GM12878 (cell line): ENCODE measurements at regions of chr2 and their contacts with region 1.

Region 1: GRCh38 chr2:69298261-69298660 is 88.8 kb downstream of the GFPT1 start:
- DNase-seq: no peak
- ATAC-seq: no peak
- H3K4me3 ChIP-seq: no peak overlapping the region
- H3K27ac ChIP-seq: no peak overlapping the region
- H3K4me1 ChIP-seq: no peaks in the 10 kb centered on the region
- H3K27me3 ChIP-seq: no peaks in the 10 kb centered on the region; a peak in 1 of 4 replicates
- CTCF ChIP-seq: no peak
- EP300 ChIP-seq: no peak
- POLR2A ChIP-seq: no peak
- RAD21 ChIP-seq: no peak

Region 2: GRCh38 chr2:69036926-69037325 is 261.3 kb before region 1 on chr2:
- CTCF ChIA-PET with region 1: no interaction called
- POLR2A ChIA-PET with region 1: no interaction called
- RAD21 ChIA-PET with region 1: no interaction called
- SMC1A ChIA-PET with region 1: no interaction called
- in situ Hi-C with region 1: loop called (anchors 5 kb)
- intact Hi-C with region 1: no loop called
- DNase-seq: no peak
- ATAC-seq: no peak
- H3K4me3 ChIP-seq: no peak overlapping the region
- H3K27ac ChIP-seq: no peak overlapping the region
- H3K4me1 ChIP-seq: no peaks in the 10 kb centered on the region
- H3K27me3 ChIP-seq: peaks cover 0 to 3% of the 10 kb centered on the region in 2 experiments; a peak in 2 of 4 replicates
- CTCF ChIP-seq: no peak
- EP300 ChIP-seq: no peak
- POLR2A ChIP-seq: no peak
- RAD21 ChIP-seq: no peak

Region 3: GRCh38 chr2:69073928-69074570 is 224.2 kb before region 1 on chr2:
- CTCF ChIA-PET with region 1: no interaction called
- POLR2A ChIA-PET with region 1: no interaction called
- RAD21 ChIA-PET with region 1: no interaction called
- SMC1A ChIA-PET with region 1: no interaction called
- in situ Hi-C with region 1: no loop called
- intact Hi-C with region 1: no loop called
- DNase-seq: no peak
- ATAC-seq: no peak
- H3K4me3 ChIP-seq: no peak overlapping the region
- H3K27ac ChIP-seq: no peak overlapping the region
- H3K4me1 ChIP-seq: no peaks in the 10 kb centered on the region
- H3K27me3 ChIP-seq: peaks cover 3 to 4% of the 10 kb centered on the region in 2 experiments; a peak in 3 of 4 replicates
- CTCF ChIP-seq: no peak
- EP300 ChIP-seq: no peak
- POLR2A ChIP-seq: no peak
- RAD21 ChIP-seq: no peak

Region 4: DNA sequence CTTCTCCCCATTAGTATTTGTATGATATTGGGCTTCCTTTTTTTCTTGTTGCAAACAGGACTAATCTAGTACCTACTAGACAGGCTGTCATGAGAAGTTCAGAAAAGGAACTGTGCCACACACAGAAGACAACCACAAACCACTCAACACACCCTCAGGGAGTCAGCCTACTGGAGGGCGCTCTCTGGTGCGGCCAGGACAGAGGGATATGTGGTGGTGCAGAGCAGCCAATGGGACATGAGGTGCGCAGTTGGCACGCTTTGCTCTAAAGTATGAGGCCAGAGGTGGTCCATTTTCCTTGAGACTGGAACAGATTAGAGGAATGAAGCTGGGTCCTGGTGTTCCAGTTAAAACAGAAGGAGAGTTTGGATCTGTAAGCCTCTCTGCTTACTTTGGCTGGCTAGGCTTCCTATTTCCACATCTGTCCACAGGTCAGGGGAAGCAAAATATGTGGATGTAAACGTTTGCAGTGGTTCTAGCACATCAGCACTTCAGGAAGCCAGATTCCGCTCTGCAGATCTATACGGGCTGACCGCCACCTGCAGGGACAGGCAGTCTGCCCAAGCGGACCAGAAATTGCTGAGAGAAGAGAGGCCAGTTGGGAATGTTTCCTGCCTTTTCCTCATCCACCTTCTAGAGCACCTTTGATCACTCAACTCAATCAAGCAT is 25.3 kb before region 1 on chr2:
- CTCF ChIA-PET with region 1: no interaction called
- POLR2A ChIA-PET with region 1: no interaction called
- RAD21 ChIA-PET with region 1: no interaction called
- SMC1A ChIA-PET with region 1: no interaction called
- in situ Hi-C with region 1: no loop called
- intact Hi-C with region 1: no loop called
- DNase-seq: no peak
- ATAC-seq: 0 out of 3 replicates have a peak, but pooled peaks have one; percentile 18
- H3K4me3 ChIP-seq: no peak overlapping the region
- H3K27ac ChIP-seq: no peak overlapping the region
- H3K4me1 ChIP-seq: no peaks in the 10 kb centered on the region
- H3K27me3 ChIP-seq: 0 out of 4 replicates have a peak, but pooled peaks cover 0 to 2% of the 10 kb centered on the region in 2 experiments
- CTCF ChIP-seq: no peak
- EP300 ChIP-seq: no peak
- POLR2A ChIP-seq: no peak
- RAD21 ChIP-seq: no peak

Region 5: DNA sequence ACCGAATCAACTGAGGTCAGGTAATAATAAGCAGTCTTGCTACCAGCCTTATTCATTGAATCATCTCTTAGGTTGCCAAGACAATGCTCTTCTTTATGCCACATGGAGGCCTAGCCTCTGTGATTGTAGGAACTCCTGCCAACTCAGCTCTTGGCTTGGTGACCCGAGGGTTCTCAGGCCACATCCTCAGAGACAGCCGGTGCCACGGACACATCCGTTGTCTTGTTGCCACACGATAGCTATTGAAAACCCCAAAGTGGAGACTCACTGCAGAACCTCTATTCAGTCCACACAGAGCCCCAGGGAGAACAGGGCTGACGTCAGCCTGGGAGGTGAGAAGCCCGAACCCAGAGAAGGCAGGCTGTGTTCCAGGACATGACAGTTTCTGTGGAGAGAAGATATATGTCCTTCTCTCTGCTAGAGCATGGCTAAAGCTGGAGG is 1308.9 kb after region 1 on chr2:
- CTCF ChIA-PET with region 1: no interaction called
- POLR2A ChIA-PET with region 1: no interaction called
- RAD21 ChIA-PET with region 1: no interaction called
- SMC1A ChIA-PET with region 1: no interaction called
- in situ Hi-C with region 1: no loop called
- intact Hi-C with region 1: no loop called
- DNase-seq: no peak
- ATAC-seq: no peak
- H3K4me3 ChIP-seq: no peak overlapping the region
- H3K27ac ChIP-seq: no peak overlapping the region
- H3K4me1 ChIP-seq: no peaks in the 10 kb centered on the region
- H3K27me3 ChIP-seq: peaks cover 0 to 2% of the 10 kb centered on the region in 2 experiments; a peak in 2 of 4 replicates
- CTCF ChIP-seq: no peak
- EP300 ChIP-seq: no peak
- POLR2A ChIP-seq: no peak
- RAD21 ChIP-seq: no peak